PC-9 (cell line): ENCODE measurements at regions of chr16 and their contacts with region 1.

Region 1: GRCh38 chr16:25291580-25291979 is 33.9 kb upstream of the ZKSCAN2 start:
- DNase-seq: no peak
- H3K4me3 ChIP-seq: no peak overlapping the region
- H3K27ac ChIP-seq: no peak overlapping the region
- H3K4me1 ChIP-seq: no peaks in the 10 kb centered on the region
- H3K27me3 ChIP-seq: peaks cover 60% of the 10 kb centered on the region
- CTCF ChIP-seq: no peak

Region 2: DNA sequence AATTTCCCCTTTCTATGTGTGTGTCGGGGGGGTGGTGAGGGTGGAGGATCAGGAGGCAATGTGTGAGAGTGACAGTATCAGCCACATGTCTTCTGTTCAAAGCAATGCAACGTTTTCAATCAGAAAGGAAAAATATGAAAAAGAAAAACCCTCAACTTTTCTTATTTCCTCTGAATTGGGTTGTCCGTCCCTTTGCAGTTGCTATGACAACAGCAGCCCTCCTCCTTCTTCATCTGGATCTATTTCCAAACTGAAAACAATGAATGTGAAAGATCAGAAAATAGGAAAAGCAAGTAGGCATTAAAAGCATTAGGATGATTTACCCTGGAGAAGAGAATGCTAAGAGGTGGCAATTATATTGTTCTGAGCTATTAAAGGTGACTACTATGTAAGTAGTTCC is 30.4 kb after region 1 on chr16:
- CTCF ChIA-PET with region 1: interaction called, 20 read pairs
- POLR2A ChIA-PET with region 1: no interaction called
- intact Hi-C with region 1: no loop called
- DNase-seq: no peak
- H3K4me3 ChIP-seq: no peak overlapping the region
- H3K27ac ChIP-seq: no peak overlapping the region
- H3K4me1 ChIP-seq: no peaks in the 10 kb centered on the region
- H3K27me3 ChIP-seq: peaks cover 20% of the 10 kb centered on the region; the same call in 1 of the 2 replicates
- CTCF ChIP-seq: no peak